Left colon (tissue), 2 donors: ENCODE measurements at regions of chr17 and their contacts with region 1.

Region 1: DNA sequence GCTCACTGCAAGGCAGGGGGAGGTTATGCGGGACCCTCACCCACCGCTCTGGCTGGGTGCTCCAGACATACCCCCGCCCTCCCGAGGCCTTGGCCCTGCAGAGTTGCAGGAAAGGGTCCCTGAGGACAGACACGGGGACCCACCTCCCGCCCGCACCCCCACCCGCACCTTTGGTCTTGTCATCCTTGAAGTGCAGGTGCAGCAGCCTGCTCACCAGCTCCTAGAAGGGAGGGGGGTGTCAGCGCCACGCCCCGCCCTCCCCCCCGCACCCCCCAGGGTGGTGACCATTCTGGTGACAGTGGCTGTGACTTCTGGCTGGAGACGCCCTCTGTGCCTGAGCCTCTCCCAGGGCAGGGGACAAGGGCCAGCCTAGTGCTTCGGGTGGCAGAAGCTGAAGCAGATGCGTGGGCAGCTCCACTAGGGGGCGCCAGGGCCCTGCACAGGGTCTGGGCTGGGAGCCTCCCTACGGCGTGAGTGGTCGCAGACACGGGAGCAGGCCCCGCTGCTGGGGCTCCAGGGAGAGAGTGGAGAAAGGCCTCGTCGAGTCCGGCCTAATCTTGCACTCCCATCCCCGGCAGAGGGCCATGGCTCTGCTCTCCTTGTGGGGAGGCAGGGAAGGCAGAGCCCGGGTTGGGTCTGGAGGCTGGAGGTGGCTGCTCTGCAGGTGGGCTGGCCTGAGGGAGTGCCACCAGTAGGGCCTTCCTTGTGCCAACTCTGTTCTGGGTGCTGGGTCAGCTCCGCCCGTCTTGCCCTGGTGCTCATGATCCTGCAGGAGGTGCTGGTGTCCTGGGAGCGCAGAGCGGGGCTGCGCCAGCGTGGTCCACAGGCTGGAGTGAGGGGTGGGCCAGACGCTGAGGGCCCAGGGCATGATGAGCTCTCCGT is 2.7 kb downstream of the CENPX start:
- DNase-seq: peak; percentile 70 to 75
- ATAC-seq: peak; percentile 9

Region 2: GRCh38 chr17:81967533-81968395 is 52.2 kb before region 1 on chr17:
- intact Hi-C with region 1: loop called in 1 of 2 experiments (anchors 5 kb)
- DNase-seq: peak; percentile 80
- ATAC-seq: peak; percentile 74

Region 3: GRCh38 chr17:82236142-82236981 is 216.4 kb after region 1 on chr17:
- intact Hi-C with region 1: no loop called
- DNase-seq: peak; percentile 66 to 72
- ATAC-seq: peak; percentile 13